ENCODE measurements at regions of chr14 and their contacts with region 1.

Region 1: GRCh38 chr14:67018720-67019119 is 170.5 kb upstream of the GARIN2 start:
- DNase-seq: no peak
- ATAC-seq: no peak
- H3K4me3 Mint-ChIP-seq: no peak overlapping the region
- H3K27ac Mint-ChIP-seq: no peak overlapping the region; the same call in 1 of the 2 replicates
- H3K4me1 Mint-ChIP-seq: no peaks in the 10 kb centered on the region
- H3K27me3 Mint-ChIP-seq: no peaks in the 10 kb centered on the region
- CTCF ChIP-seq: no peak

Region 2: DNA sequence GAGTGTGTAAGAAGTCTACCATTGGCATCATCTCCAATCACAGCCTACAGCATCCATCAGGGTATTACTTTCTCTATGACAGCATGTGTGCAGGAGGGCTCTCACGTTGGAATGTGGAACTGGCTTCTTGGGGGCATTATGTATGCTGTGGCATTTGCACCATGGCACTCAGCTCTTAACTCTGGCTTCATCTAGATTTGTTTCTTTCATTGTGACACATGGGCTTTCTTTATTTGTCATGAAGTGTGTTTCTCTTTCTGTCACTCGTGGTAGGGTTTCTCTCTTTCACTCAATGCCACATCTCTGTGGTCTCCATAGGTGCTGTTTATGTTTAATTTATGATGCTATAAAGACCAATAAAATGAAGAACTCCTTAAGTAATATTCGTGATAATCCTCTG is 20.7 kb before region 1 on chr14:
- CTCF ChIA-PET with region 1: no interaction called
- POLR2A ChIA-PET with region 1: interaction called, 13 read pairs
- DNase-seq: no peak
- ATAC-seq: no peak
- H3K4me3 Mint-ChIP-seq: no peak overlapping the region
- H3K27ac Mint-ChIP-seq: no peak overlapping the region
- H3K4me1 Mint-ChIP-seq: no peaks in the 10 kb centered on the region
- H3K27me3 Mint-ChIP-seq: no peaks in the 10 kb centered on the region
- CTCF ChIP-seq: no peak